ENCODE measurements at regions of chr22 and their contacts with region 1.

Region 1: DNA sequence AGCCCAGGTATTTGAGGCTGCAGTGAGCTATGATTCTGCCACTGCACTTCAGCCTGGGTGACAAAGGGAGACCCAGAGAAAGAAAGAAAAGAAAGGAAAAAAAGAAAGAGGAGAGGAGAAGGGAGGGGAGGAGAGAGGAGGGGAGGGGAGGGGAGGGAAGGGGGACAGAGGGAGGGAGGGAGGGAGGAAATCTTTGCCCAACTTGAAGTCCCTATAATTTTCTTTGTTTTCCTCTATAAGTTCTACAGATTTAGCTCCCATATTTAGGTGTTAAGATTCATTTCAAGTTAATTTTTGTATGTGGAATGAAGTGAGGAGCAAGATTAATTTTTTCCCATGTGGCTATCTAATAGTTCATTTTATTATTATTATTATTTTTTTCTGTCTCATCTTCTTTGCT is 328.3 kb downstream of the LARGE1 start:
- DNase-seq: no peak
- H3K4me3 ChIP-seq: no peak overlapping the region
- H3K27ac ChIP-seq: no peak overlapping the region
- H3K4me1 ChIP-seq: no peaks in the 10 kb centered on the region
- H3K27me3 ChIP-seq: no peaks in the 10 kb centered on the region
- CTCF ChIP-seq: no peak

Region 2: DNA sequence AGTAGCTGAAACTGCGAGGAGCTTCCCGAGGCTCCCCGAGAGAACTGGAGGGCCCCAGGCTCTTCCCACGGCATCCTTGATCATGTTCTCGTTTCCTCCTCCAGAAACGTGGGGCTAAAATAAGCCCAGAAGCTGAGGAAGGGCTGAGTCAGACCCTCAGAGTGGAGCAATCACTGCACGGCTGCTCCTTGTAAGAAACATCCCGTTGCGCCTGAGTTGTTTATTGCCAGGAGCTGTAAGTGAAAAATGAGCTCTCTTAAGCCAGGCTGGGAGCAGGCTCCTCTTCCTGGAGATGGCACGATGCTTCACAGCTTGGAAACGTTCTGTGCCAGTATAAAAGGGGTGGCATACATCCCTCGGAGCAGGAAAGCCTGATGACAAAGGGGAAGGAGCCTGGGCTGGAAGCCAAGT is 486.4 kb before region 1 on chr22:
- CTCF ChIA-PET with region 1: no interaction called
- POLR2A ChIA-PET with region 1: interaction called, 10 read pairs
- intact Hi-C with region 1: no loop called
- DNase-seq: no peak
- H3K4me3 ChIP-seq: no peak overlapping the region
- H3K27ac ChIP-seq: no peak overlapping the region
- H3K4me1 ChIP-seq: no peaks in the 10 kb centered on the region
- H3K27me3 ChIP-seq: peaks cover 86% of the 10 kb centered on the region
- CTCF ChIP-seq: no peak

Measured in PC-9 (cell line).